ENCODE measurements at regions of chr10 and their contacts with region 1.

Region 1: DNA sequence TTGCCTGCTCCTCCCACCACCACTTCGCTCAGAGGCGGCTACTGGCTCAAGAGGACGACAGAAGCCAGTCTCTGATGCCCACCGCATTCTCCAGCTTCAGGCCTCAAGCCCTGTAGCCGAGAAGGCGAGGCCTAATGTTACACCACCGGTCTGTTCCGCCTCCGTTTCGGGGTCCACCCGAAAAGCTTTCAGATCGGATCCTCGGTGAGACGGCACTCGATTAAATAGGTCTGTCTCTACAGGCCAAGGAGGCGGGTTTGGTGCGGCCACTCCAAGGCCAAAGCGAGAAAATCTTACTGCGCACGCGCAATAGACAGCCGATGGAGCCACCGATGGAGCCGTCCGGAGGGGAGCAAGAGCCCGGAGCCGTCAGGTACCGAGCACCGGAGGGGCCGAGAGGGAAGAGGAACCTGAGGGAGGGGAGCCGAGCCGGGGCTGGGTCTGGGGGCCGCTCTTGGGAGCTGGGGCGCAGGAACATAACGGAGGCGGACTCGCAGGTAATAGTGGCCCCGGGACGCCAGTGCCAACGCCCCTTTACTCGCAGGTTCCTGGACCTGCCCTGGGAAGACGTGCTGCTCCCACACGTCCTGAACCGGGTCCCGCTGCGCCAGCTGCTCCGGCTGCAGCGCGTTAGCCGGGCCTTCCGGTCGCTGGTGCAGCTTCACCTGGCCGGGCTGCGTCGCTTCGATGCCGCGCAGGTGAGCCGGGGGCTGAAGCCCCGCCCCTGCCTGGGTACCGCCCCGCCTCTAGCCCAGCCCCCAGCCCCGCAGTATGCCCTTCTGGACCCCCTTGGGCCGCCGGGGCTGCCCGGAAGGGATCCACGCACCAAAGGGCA is at the start of gene FBXL15:
- DNase-seq: peak; percentile 98
- H3K4me3 Mint-ChIP-seq: peak within 1 kb of the TSS; percentile 99
- H3K27ac Mint-ChIP-seq: peak within 1 kb of the TSS; percentile 94
- H3K4me1 Mint-ChIP-seq: peaks cover 5% of the 10 kb centered on the region
- H3K27me3 Mint-ChIP-seq: peaks cover 5% of the 10 kb centered on the region
- CTCF ChIP-seq: no peak
- total RNA-seq, gene FBXL15: 11.1 and 11.3 TPM in 2 replicates

Region 2: DNA sequence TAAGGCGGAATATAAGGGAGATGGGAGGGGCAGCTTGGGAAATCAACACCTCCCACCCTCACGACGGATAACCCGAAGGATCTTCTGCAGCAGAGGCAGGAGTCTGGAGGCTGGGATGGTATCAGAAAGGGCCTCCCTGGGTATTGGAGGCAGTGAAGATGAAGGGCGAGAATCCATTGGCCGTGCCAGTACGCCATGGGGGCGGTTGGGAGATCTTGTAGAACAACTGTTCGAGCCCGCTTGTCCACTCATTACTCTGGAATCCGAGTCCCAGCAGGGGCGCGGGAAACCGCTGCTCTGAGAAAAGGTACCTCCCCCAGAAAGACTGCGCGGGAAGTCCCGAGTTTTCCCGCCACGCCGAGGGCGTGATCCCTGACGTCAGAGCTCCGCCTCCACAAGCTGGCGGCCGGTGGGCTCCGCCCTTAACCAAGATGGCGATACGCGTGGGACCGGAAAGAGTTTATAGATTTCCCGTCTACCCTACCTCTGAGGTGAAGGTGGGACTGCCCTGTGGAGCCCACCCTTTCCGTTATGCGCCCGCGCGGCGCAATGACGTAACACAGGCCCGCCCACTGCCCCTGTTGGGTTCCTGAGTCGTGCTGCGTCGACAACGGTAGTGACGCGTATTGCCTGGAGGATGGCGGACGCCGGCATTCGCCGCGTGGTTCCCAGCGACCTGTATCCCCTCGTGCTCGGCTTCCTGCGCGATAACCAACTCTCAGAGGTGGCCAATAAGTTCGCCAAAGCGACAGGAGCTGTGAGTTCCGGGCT is 269.1 kb before region 1 on chr10 and contains the start of gene NOLC1:
- CTCF ChIA-PET with region 1: interaction called, 5 read pairs
- POLR2A ChIA-PET with region 1: interaction called, 10 read pairs
- intact Hi-C with region 1: no loop called
- DNase-seq: peak; percentile 98
- H3K4me3 Mint-ChIP-seq: peak within 1 kb of the TSS; percentile 75
- H3K27ac Mint-ChIP-seq: peak within 1 kb of the TSS; percentile 92
- H3K4me1 Mint-ChIP-seq: peaks cover 14% of the 10 kb centered on the region
- H3K27me3 Mint-ChIP-seq: no peaks in the 10 kb centered on the region
- CTCF ChIP-seq: no peak
- total RNA-seq, gene NOLC1: 122 and 168 TPM in 2 replicates

Region 3: GRCh38 chr10:102225646-102226541 is 195.1 kb before region 1 on chr10 and contains the start of gene ELOVL3:
- CTCF ChIA-PET with region 1: interaction called, 26 read pairs
- POLR2A ChIA-PET with region 1: interaction called, 15 read pairs
- intact Hi-C with region 1: loop called (anchors 10 kb)
- DNase-seq: peak; percentile 64
- H3K4me3 Mint-ChIP-seq: peak within 1 kb of the TSS; percentile 62
- H3K27ac Mint-ChIP-seq: no peak within 1 kb of the TSS
- H3K4me1 Mint-ChIP-seq: peaks cover 25% of the 10 kb centered on the region
- H3K27me3 Mint-ChIP-seq: peaks cover 37% of the 10 kb centered on the region
- CTCF ChIP-seq: no peak
- total RNA-seq, gene ELOVL3: not detected in 2 replicates

Region 4: GRCh38 chr10:102280397-102281101 is 140.5 kb before region 1 on chr10:
- CTCF ChIA-PET with region 1: no interaction called
- POLR2A ChIA-PET with region 1: no interaction called
- intact Hi-C with region 1: no loop called
- DNase-seq: no peak
- H3K4me3 Mint-ChIP-seq: no peak overlapping the region
- H3K27ac Mint-ChIP-seq: peak overlapping the region; percentile 32
- H3K4me1 Mint-ChIP-seq: peaks cover 28% of the 10 kb centered on the region
- H3K27me3 Mint-ChIP-seq: no peaks in the 10 kb centered on the region
- CTCF ChIP-seq: no peak

Region 5: DNA sequence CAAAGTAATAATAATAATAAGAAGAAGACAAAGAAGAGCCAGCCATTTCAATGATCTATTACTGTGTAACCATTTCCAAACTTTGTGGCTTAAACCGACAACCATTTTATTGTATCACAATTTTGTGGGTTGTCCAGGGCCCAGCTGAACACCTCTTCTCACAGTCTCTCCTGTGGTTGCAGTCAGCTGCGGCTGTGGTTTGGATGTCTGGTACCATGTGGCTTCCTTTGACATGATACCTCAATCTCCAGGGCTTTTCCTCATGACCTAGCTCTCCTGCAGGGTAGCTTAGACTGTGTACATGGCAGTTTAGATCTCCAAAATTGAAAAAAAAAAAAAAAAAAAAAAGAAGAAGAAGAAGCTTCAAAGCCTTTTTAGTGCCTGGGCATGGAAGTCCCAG is 98.1 kb before region 1 on chr10:
- CTCF ChIA-PET with region 1: no interaction called
- POLR2A ChIA-PET with region 1: no interaction called
- intact Hi-C with region 1: no loop called
- DNase-seq: no peak
- H3K4me3 Mint-ChIP-seq: no peak overlapping the region
- H3K27ac Mint-ChIP-seq: no peak overlapping the region
- H3K4me1 Mint-ChIP-seq: peaks cover 17% of the 10 kb centered on the region
- H3K27me3 Mint-ChIP-seq: no peaks in the 10 kb centered on the region
- CTCF ChIP-seq: no peak

Region 6: GRCh38 chr10:102334101-102334500 is 86.9 kb before region 1 on chr10:
- CTCF ChIA-PET with region 1: no interaction called
- POLR2A ChIA-PET with region 1: no interaction called
- intact Hi-C with region 1: no loop called
- DNase-seq: no peak
- H3K4me3 Mint-ChIP-seq: no peak overlapping the region
- H3K27ac Mint-ChIP-seq: no peak overlapping the region
- H3K4me1 Mint-ChIP-seq: peaks cover 7% of the 10 kb centered on the region
- H3K27me3 Mint-ChIP-seq: no peaks in the 10 kb centered on the region
- CTCF ChIP-seq: no peak

Region 7: GRCh38 chr10:102394079-102394800 is 26.8 kb before region 1 on chr10:
- CTCF ChIA-PET with region 1: interaction called, 137 read pairs
- POLR2A ChIA-PET with region 1: interaction called, 96 read pairs
- intact Hi-C with region 1: loop called (anchors 2 kb)
- DNase-seq: peak; percentile 96
- H3K4me3 Mint-ChIP-seq: peak overlapping the region; percentile 92
- H3K27ac Mint-ChIP-seq: peak overlapping the region; percentile 99
- H3K4me1 Mint-ChIP-seq: peaks cover 7% of the 10 kb centered on the region
- H3K27me3 Mint-ChIP-seq: no peaks in the 10 kb centered on the region
- CTCF ChIP-seq: no peak

Region 8: GRCh38 chr10:102432162-102432950 is 11.3 kb after region 1 on chr10 and contains the start of gene CUEDC2:
- CTCF ChIA-PET with region 1: interaction called, 11 read pairs
- POLR2A ChIA-PET with region 1: interaction called, 119 read pairs
- intact Hi-C with region 1: no loop called
- DNase-seq: peak; percentile 97
- H3K4me3 Mint-ChIP-seq: peak within 1 kb of the TSS; percentile 90
- H3K27ac Mint-ChIP-seq: peak within 1 kb of the TSS; percentile 94
- H3K4me1 Mint-ChIP-seq: peaks cover 26% of the 10 kb centered on the region
- H3K27me3 Mint-ChIP-seq: no peaks in the 10 kb centered on the region
- CTCF ChIP-seq: no peak
- total RNA-seq, gene CUEDC2: 55.0 and 64.5 TPM in 2 replicates

Region 9: DNA sequence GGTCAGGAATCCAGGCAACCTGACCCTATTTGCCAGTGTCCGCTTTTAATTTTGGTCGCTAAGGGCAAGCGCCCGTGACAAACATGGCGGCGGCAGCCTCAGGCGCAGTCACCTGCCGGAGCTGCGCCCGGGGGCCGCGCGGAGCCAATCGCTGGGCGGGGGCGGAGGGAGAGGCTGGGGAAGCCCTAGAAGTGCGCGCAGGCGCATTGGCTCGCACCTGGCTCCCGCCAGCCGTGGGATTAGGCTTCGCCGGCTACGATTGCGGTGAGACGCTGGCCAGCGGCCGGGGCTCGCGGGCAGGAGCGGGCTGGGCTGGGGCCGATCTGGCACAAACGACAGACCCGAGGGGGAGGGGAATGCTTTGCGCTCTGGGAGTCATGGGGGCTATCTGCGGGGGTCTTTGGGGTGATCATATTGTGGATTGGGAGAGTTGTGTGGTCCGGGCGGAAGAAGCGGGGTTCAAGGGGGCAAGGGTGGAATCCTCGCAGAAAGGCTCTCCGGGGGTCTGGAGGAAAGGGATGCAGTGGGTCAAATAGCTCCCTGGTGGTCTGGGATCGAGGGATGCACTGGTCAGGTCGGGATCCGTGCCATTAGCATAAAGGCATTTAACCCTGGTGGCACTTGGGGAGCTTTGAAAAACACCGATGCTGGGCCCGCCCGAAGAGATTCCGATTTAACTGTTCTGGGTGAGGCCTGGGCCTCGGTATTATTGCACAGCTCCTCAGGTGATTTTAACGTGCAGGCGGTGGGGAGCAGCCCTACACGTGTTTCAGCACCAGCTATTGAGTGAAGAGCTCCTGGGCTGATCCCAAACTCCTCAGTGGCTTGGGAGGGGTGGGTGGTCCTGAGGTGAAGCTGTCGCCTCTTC is 40.4 kb after region 1 on chr10:
- CTCF ChIA-PET with region 1: interaction called, 11 read pairs
- POLR2A ChIA-PET with region 1: interaction called, 6 read pairs
- intact Hi-C with region 1: no loop called
- DNase-seq: peak; percentile 95
- H3K4me3 Mint-ChIP-seq: peak overlapping the region; percentile 92
- H3K27ac Mint-ChIP-seq: peak overlapping the region; percentile 63
- H3K4me1 Mint-ChIP-seq: peaks cover 15% of the 10 kb centered on the region
- H3K27me3 Mint-ChIP-seq: no peaks in the 10 kb centered on the region
- CTCF ChIP-seq: no peak

Region 10: GRCh38 chr10:102503281-102504220 is 82.5 kb after region 1 on chr10 and contains the start of gene SUFU:
- CTCF ChIA-PET with region 1: interaction called, 4 read pairs
- POLR2A ChIA-PET with region 1: interaction called, 51 read pairs
- intact Hi-C with region 1: no loop called
- DNase-seq: peak; percentile 100
- H3K4me3 Mint-ChIP-seq: no peak within 1 kb of the TSS
- H3K27ac Mint-ChIP-seq: peak within 1 kb of the TSS; percentile 65
- H3K4me1 Mint-ChIP-seq: peaks cover 16% of the 10 kb centered on the region
- H3K27me3 Mint-ChIP-seq: no peaks in the 10 kb centered on the region
- CTCF ChIP-seq: peak; percentile 75
- total RNA-seq, gene SUFU: 6.3 TPM in 2 replicates

Region 11: GRCh38 chr10:102608487-102608886 is 187.5 kb after region 1 on chr10:
- CTCF ChIA-PET with region 1: no interaction called
- POLR2A ChIA-PET with region 1: no interaction called
- intact Hi-C with region 1: no loop called
- DNase-seq: no peak
- H3K4me3 Mint-ChIP-seq: no peak overlapping the region
- H3K27ac Mint-ChIP-seq: no peak overlapping the region
- H3K4me1 Mint-ChIP-seq: peaks cover 20% of the 10 kb centered on the region
- H3K27me3 Mint-ChIP-seq: no peaks in the 10 kb centered on the region
- CTCF ChIP-seq: no peak